ENCODE measurements at regions of chr15 and their contacts with region 1.

Region 1: GRCh38 chr15:63752075-63752684 is 81.6 kb downstream of the HERC1 start:
- DNase-seq: peak; percentile 23
- ATAC-seq: peak; percentile 89
- H3K4me3 ChIP-seq: no peak overlapping the region
- H3K27ac ChIP-seq: no peak overlapping the region
- H3K4me1 ChIP-seq: no peaks in the 10 kb centered on the region
- H3K27me3 ChIP-seq: no peaks in the 10 kb centered on the region
- CTCF ChIP-seq: peak; percentile 55 to 82 (median 70); a peak in 5 of 6 replicates
- EP300 ChIP-seq: no peak
- POLR2A ChIP-seq: no peak
- RAD21 ChIP-seq: peak; percentile 90

Region 2: GRCh38 chr15:62413153-62413552 is 1339.0 kb before region 1 on chr15:
- CTCF ChIA-PET with region 1: no interaction called
- POLR2A ChIA-PET with region 1: no interaction called
- RAD21 ChIA-PET with region 1: no interaction called
- SMC1A ChIA-PET with region 1: no interaction called
- in situ Hi-C with region 1: no loop called
- intact Hi-C with region 1: no loop called
- DNase-seq: no peak
- ATAC-seq: no peak
- H3K4me3 ChIP-seq: no peak overlapping the region
- H3K27ac ChIP-seq: no peak overlapping the region
- H3K4me1 ChIP-seq: no peaks in the 10 kb centered on the region
- H3K27me3 ChIP-seq: no peaks in the 10 kb centered on the region; a peak in 3 of 4 replicates
- CTCF ChIP-seq: no peak
- EP300 ChIP-seq: no peak
- POLR2A ChIP-seq: no peak
- RAD21 ChIP-seq: no peak

Region 3: DNA sequence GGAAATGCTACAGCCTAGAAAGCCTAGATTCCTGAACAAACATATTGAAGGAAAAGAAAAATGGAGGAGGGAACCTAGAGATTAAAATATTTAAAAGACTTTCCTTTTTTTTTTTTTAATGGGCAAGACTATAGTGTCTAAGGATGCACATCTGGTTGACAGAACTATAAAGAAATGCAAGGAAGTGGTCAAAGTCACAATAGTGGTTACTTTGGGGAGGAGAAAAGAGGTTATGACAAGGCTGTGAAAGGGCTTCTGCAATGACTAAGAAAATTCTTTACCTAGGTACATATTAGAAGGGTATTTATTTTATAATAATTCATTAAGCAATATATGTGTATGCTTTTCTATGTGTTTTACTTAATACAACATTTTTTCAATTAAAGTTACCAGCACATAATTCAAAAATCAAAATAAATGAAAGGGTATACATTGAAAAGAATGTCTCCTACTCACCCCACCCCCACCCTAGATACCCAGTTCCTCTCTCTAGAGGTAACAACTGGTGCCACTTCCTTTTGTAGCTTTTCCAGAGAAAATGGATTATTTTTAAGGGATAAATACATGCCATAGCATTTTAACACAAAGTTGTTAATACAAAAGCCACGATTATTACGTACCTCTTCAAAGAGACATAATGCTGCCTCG is 11.4 kb after region 1 on chr15:
- CTCF ChIA-PET with region 1: interaction called, 23 read pairs
- POLR2A ChIA-PET with region 1: no interaction called
- RAD21 ChIA-PET with region 1: interaction called, 17 read pairs
- SMC1A ChIA-PET with region 1: interaction called, 61 read pairs
- in situ Hi-C with region 1: no loop called
- intact Hi-C with region 1: no loop called
- DNase-seq: peak; percentile 26
- ATAC-seq: peak; percentile 88
- H3K4me3 ChIP-seq: no peak overlapping the region
- H3K27ac ChIP-seq: peak overlapping the region; percentile 34; the same call in 1 of the 2 replicates
- H3K4me1 ChIP-seq: peaks cover 10% of the 10 kb centered on the region; the same call in 1 of the 2 replicates
- H3K27me3 ChIP-seq: no peaks in the 10 kb centered on the region
- CTCF ChIP-seq: no peak
- EP300 ChIP-seq: no peak
- POLR2A ChIP-seq: no peak
- RAD21 ChIP-seq: no peak

Region 4: DNA sequence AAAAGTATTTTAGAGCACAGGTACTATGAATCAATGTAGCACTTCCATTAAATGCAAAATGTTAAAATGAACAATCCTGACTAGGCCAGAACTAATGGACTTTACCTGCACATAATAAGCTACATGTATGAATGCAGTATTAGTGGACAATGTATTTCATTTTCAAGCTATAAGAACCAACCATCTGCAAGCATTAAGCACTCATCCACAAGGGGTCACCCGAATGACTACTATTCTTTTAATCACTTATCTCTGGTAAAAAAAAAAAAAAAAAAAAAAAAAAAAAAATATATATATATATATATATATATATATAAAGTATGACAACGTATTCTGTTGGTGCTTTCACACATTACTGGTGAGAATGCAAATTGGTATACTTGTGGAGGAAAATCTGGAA is 74.3 kb after region 1 on chr15:
- CTCF ChIA-PET with region 1: interaction called, 15 read pairs
- POLR2A ChIA-PET with region 1: no interaction called
- RAD21 ChIA-PET with region 1: interaction called, 12 read pairs
- SMC1A ChIA-PET with region 1: interaction called, 12 read pairs
- in situ Hi-C with region 1: no loop called
- intact Hi-C with region 1: loop called (anchors 5 kb)
- DNase-seq: no peak
- ATAC-seq: no peak
- H3K4me3 ChIP-seq: no peak overlapping the region
- H3K27ac ChIP-seq: no peak overlapping the region
- H3K4me1 ChIP-seq: no peaks in the 10 kb centered on the region
- H3K27me3 ChIP-seq: no peaks in the 10 kb centered on the region
- CTCF ChIP-seq: peak; percentile 21 to 31 (median 27); a peak in 3 of 6 replicates
- EP300 ChIP-seq: no peak
- POLR2A ChIP-seq: no peak
- RAD21 ChIP-seq: peak; percentile 44

Region 5: GRCh38 chr15:63891079-63891767 is 139.0 kb after region 1 on chr15:
- CTCF ChIA-PET with region 1: interaction called, 147 read pairs
- POLR2A ChIA-PET with region 1: interaction called, 5 read pairs
- RAD21 ChIA-PET with region 1: interaction called, 57 read pairs
- SMC1A ChIA-PET with region 1: interaction called, 135 read pairs
- in situ Hi-C with region 1: loop called (anchors 5 kb)
- intact Hi-C with region 1: loop called (anchors 1 kb)
- DNase-seq: peak; percentile 72
- ATAC-seq: peak; percentile 67
- H3K4me3 ChIP-seq: no peak overlapping the region
- H3K27ac ChIP-seq: peak overlapping the region; percentile 79
- H3K4me1 ChIP-seq: peaks cover 62% of the 10 kb centered on the region
- H3K27me3 ChIP-seq: no peaks in the 10 kb centered on the region
- CTCF ChIP-seq: peak; percentile 80 to 88 (median 86)
- EP300 ChIP-seq: no peak
- POLR2A ChIP-seq: no peak
- RAD21 ChIP-seq: peak; percentile 88

Region 6: GRCh38 chr15:63970621-63971426 is 218.6 kb after region 1 on chr15:
- CTCF ChIA-PET with region 1: interaction called, 6 read pairs
- POLR2A ChIA-PET with region 1: no interaction called
- RAD21 ChIA-PET with region 1: interaction called, 12 read pairs
- SMC1A ChIA-PET with region 1: interaction called, 10 read pairs
- in situ Hi-C with region 1: no loop called
- intact Hi-C with region 1: no loop called
- DNase-seq: peak; percentile 85
- ATAC-seq: peak; percentile 96
- H3K4me3 ChIP-seq: peak overlapping the region; percentile 24
- H3K27ac ChIP-seq: peak overlapping the region; percentile 95
- H3K4me1 ChIP-seq: peaks cover 48% of the 10 kb centered on the region
- H3K27me3 ChIP-seq: no peaks in the 10 kb centered on the region
- CTCF ChIP-seq: no peak
- EP300 ChIP-seq: peak; percentile 46 to 90; a peak in 3 of 4 replicates
- POLR2A ChIP-seq: no peak
- RAD21 ChIP-seq: no peak

Region 7: DNA sequence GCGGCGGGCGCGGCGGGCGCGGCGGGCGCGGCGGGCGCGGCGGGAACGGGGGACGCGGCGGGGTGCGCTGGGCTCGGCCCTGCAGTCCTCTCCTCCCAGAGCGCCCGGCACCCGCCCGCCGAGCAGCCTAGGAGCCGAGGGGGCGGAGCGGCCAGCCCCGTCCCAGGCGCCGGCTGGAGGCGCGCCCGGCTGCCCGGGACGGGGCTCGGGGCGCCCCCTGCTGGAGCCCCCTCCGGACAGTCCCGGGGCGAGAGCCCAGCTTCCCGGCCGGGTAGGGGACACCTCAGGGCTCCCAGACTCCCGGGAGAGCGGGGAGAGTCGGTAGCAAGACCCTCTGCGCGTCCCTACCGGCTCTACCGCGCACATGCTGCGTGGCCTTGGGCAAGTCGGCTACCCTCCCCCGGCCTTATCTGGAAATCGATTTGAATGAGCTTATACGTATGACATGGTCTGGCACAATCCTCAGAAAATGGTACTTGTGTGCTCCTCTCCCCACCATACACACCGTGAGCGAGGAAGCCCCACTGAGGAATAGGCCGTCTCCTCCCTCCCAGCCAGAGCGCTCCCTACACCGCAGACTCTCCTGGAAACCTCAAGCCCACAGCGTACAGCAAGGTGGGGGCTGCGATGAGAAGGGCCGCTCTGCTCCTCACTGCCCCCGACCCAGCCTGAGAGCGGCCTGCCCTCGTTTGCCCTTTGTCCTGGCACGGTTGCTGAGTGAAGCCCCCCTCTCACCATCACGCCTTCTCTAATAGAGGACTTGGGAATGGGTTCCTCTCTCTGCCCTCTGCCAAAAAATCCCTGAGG is 294.4 kb after region 1 on chr15 and contains the start of gene DAPK2:
- CTCF ChIA-PET with region 1: interaction called, 60 read pairs
- POLR2A ChIA-PET with region 1: interaction called, 6 read pairs
- RAD21 ChIA-PET with region 1: interaction called, 69 read pairs
- SMC1A ChIA-PET with region 1: interaction called, 42 read pairs
- in situ Hi-C with region 1: no loop called
- intact Hi-C with region 1: loop called (anchors 5 kb)
- DNase-seq: no peak
- ATAC-seq: peak; percentile 79
- H3K4me3 ChIP-seq: peak within 1 kb of the TSS; percentile 69
- H3K27ac ChIP-seq: peak within 1 kb of the TSS; percentile 55
- H3K4me1 ChIP-seq: peaks cover 36% of the 10 kb centered on the region
- H3K27me3 ChIP-seq: no peaks in the 10 kb centered on the region
- CTCF ChIP-seq: peak; percentile 71 to 81 (median 74)
- EP300 ChIP-seq: no peak
- POLR2A ChIP-seq: no peak; the same call in 1 of the 2 replicates
- RAD21 ChIP-seq: peak; percentile 67
- polyA plus RNA-seq, gene DAPK2: 0.69 to 0.75 TPM

Region 8: GRCh38 chr15:64153480-64154367 is 401.5 kb after region 1 on chr15:
- CTCF ChIA-PET with region 1: interaction called, 18 read pairs
- POLR2A ChIA-PET with region 1: no interaction called
- RAD21 ChIA-PET with region 1: no interaction called
- SMC1A ChIA-PET with region 1: interaction called, 9 read pairs
- in situ Hi-C with region 1: no loop called
- intact Hi-C with region 1: no loop called
- DNase-seq: peak; percentile 86
- ATAC-seq: peak; percentile 76
- H3K4me3 ChIP-seq: peak overlapping the region; percentile 82
- H3K27ac ChIP-seq: peak overlapping the region; percentile 30
- H3K4me1 ChIP-seq: peaks cover 42% of the 10 kb centered on the region
- H3K27me3 ChIP-seq: no peaks in the 10 kb centered on the region
- CTCF ChIP-seq: peak; percentile 99; a peak in 5 of 6 replicates
- EP300 ChIP-seq: no peak
- POLR2A ChIP-seq: peak; percentile 78
- RAD21 ChIP-seq: peak; percentile 94